ENCODE measurements at regions of chr15 and their contacts with region 1.

Region 1: DNA sequence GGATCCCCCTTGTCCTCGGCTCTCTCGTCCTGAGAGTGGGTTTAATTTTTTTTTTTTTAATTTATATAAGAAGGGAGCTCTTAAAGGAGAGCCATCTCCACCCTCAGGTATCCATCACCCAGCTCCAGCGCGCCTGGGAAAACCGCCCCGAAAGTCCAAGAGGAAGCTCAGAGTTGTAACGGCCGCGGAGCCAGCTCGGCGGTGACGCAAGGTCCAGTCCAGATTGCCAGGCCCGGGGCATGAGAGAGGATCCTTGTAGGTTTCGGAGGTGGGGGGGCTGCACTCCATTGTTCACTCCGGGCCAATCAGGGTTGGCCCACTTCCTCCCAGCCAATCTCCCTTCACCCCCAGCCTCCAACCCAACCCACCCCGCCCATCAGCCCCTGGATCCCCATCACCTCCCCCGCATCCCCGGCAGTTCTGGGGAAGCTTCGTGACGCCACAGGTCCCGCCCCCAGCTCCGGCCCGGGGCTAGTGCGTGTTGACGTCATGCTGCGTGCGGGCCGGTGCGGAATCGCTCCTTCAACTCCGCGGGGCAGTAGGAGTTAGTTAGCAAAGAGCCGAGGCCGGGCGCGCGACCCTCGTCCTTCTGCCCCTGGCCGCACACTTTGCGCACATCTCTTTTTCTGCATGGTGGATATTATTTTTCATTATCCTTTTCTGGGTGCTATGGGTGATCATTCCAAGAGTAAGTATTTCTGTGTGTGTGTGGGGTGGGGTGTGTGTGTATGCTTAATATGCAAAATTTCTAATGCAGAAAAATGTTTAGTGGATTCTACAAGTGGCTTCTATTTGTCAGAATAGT is at the start of gene ISL2:
- DNase-seq: peak; percentile 97
- H3K4me3 ChIP-seq: peak within 1 kb of the TSS; percentile 82
- H3K4me3 Mint-ChIP-seq: peak within 1 kb of the TSS; percentile 90
- H3K27ac Mint-ChIP-seq: peak within 1 kb of the TSS; percentile 89
- H3K4me1 ChIP-seq: peaks cover 27% of the 10 kb centered on the region
- H3K4me1 Mint-ChIP-seq: peaks cover 18% of the 10 kb centered on the region
- H3K27me3 ChIP-seq: no peaks in the 10 kb centered on the region
- H3K27me3 Mint-ChIP-seq: no peaks in the 10 kb centered on the region
- CTCF ChIP-seq: no peak
- total RNA-seq, gene ISL2: 11.0 TPM in 2 replicates

Region 2: GRCh38 chr15:76190834-76191538 is 145.5 kb before region 1 on chr15:
- CTCF ChIA-PET with region 1: interaction called, 5 read pairs
- POLR2A ChIA-PET with region 1: no interaction called
- intact Hi-C with region 1: loop called (anchors 2 kb)
- DNase-seq: peak; percentile 78 to 87
- H3K4me3 ChIP-seq: peak overlapping the region; percentile 19; the same call in 1 of the 2 replicates
- H3K4me3 Mint-ChIP-seq: peak overlapping the region; percentile 66
- H3K27ac Mint-ChIP-seq: peak overlapping the region; percentile 19
- H3K4me1 ChIP-seq: peaks cover 9% of the 10 kb centered on the region
- H3K4me1 Mint-ChIP-seq: peaks cover 16% of the 10 kb centered on the region
- H3K27me3 ChIP-seq: no peaks in the 10 kb centered on the region
- H3K27me3 Mint-ChIP-seq: peaks cover 3% of the 10 kb centered on the region
- CTCF ChIP-seq: peak; percentile 84 to 89

Region 3: DNA sequence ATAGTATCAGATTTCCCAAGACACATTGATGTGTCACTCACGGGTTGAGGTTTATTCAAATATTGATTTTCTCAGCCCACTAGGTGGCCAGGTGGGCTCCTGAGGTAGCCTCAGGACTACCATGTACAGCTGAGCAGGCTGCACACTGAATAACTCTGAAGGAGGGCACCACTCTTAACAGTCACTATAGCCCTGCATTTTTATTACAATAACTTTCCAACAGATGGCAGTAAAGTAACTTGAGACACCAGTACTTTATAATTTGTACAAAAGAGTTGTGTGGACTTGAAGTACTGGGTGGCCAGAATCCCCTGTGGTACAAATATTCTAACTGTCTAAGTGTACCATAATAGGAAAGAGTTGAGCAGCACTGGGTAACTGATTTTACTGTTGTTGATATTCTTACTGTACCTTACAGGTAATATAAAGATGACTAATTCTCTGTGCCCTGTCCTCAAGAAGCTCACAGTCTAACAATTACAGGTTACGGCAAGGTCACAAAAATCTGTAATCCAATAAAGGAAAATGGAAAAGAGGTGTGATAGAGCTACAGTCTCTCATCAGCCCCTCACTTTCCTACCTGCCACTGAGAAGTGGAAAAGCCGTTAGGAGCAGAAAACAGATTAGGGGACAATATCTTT is 101.2 kb before region 1 on chr15:
- CTCF ChIA-PET with region 1: interaction called, 4 read pairs
- POLR2A ChIA-PET with region 1: interaction called, 3 read pairs
- intact Hi-C with region 1: loop called (anchors 2 kb)
- DNase-seq: peak in 1 of 2 experiments; percentile 42
- H3K4me3 ChIP-seq: no peak overlapping the region
- H3K4me3 Mint-ChIP-seq: no peak overlapping the region
- H3K27ac Mint-ChIP-seq: no peak overlapping the region
- H3K4me1 ChIP-seq: no peaks in the 10 kb centered on the region
- H3K4me1 Mint-ChIP-seq: peaks cover 12% of the 10 kb centered on the region
- H3K27me3 ChIP-seq: no peaks in the 10 kb centered on the region
- H3K27me3 Mint-ChIP-seq: no peaks in the 10 kb centered on the region
- CTCF ChIP-seq: peak; percentile 32 to 61

Region 4: DNA sequence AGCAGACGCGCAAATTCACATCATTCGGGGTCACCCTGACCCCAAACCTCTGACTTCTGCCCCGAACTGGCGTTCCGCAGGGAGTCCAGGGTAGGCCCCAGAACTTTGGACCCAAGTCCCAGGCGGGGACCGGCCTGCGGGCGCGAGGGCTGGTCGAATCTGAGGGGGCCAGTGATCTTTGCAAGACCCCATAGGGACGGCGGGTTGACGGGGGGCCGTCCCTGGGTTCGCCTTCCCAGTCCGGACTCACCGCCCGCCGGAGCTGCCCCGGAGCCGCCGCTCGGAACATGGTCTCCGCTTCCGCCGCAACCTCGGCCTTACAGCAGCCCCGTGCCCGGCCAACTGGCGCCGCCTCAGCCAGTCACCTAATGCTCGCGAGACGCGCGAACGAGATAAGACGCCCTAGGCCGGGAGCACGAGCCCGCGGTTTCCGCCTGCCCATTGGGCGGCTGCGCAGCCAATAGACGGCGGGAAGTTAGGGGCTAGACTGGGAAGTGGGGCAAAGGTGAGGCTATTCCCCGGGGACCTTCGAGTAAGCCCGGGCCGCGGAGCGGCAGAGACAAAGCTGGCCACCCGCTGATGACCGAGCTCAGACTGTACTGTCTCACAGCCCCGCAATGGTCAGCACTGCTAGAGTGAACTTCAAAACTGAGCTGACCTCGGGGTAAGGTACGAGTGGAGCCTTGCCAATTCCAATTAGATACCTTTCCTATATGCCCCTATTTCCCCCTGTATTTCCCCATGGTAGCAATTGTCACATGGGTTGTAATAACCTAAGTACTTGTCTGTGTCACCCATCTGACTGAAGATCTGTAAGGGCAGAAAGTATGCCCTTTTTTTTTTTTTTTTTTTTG is 25.1 kb before region 1 on chr15 and contains the start of gene ETFA:
- CTCF ChIA-PET with region 1: interaction called, 5 read pairs
- POLR2A ChIA-PET with region 1: interaction called, 22 read pairs
- intact Hi-C with region 1: loop called (anchors 2 kb)
- DNase-seq: peak; percentile 98
- H3K4me3 ChIP-seq: peak within 1 kb of the TSS; percentile 75
- H3K4me3 Mint-ChIP-seq: peak within 1 kb of the TSS; percentile 63
- H3K27ac Mint-ChIP-seq: peak within 1 kb of the TSS; percentile 40
- H3K4me1 ChIP-seq: peaks cover 40% of the 10 kb centered on the region
- H3K4me1 Mint-ChIP-seq: peaks cover 25% of the 10 kb centered on the region
- H3K27me3 ChIP-seq: no peaks in the 10 kb centered on the region
- H3K27me3 Mint-ChIP-seq: no peaks in the 10 kb centered on the region
- CTCF ChIP-seq: no peak
- total RNA-seq, gene ETFA: 241 and 260 TPM in 2 replicates

Region 5: GRCh38 chr15:76353903-76354302 is 17.4 kb after region 1 on chr15:
- CTCF ChIA-PET with region 1: interaction called, 7 read pairs
- POLR2A ChIA-PET with region 1: interaction called, 13 read pairs
- intact Hi-C with region 1: no loop called
- DNase-seq: no peak
- H3K4me3 ChIP-seq: no peak overlapping the region
- H3K4me3 Mint-ChIP-seq: peak overlapping the region; percentile 34
- H3K27ac Mint-ChIP-seq: no peak overlapping the region
- H3K4me1 ChIP-seq: peaks cover 29% of the 10 kb centered on the region
- H3K4me1 Mint-ChIP-seq: peaks cover 20% of the 10 kb centered on the region
- H3K27me3 ChIP-seq: no peaks in the 10 kb centered on the region
- H3K27me3 Mint-ChIP-seq: no peaks in the 10 kb centered on the region
- CTCF ChIP-seq: no peak

Region 6: DNA sequence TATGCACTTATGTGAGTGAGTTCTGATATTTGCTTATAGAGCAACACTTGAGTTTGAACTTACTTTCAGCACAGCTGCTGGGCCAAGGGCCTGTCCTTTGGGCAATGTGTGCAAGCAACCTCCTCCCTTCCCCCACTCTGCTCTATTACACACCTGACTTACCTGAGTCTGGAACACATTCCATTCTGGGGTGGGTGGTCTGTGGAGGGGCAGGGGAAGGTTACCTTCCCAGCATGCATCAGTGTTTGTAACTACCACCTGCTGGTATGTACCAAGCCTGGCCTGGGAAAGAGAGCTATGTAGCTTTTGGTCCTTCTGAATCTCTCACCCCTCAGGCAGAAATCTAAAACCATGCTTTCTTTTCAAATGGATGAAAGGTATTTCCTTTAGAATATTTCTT is 103.1 kb after region 1 on chr15:
- CTCF ChIA-PET with region 1: no interaction called
- POLR2A ChIA-PET with region 1: interaction called, 10 read pairs
- intact Hi-C with region 1: no loop called
- DNase-seq: peak; percentile 27 to 55
- H3K4me3 ChIP-seq: no peak overlapping the region
- H3K4me3 Mint-ChIP-seq: no peak overlapping the region
- H3K27ac Mint-ChIP-seq: no peak overlapping the region
- H3K4me1 ChIP-seq: peaks cover 4% of the 10 kb centered on the region; the same call in 1 of the 2 replicates
- H3K4me1 Mint-ChIP-seq: no peaks in the 10 kb centered on the region
- H3K27me3 ChIP-seq: no peaks in the 10 kb centered on the region
- H3K27me3 Mint-ChIP-seq: no peaks in the 10 kb centered on the region
- CTCF ChIP-seq: no peak

Region 7: GRCh38 chr15:76866716-76867321 is 530.4 kb after region 1 on chr15:
- CTCF ChIA-PET with region 1: no interaction called
- POLR2A ChIA-PET with region 1: interaction called, 3 read pairs
- intact Hi-C with region 1: loop called (anchors 2 kb)
- DNase-seq: peak in 1 of 2 experiments; percentile 44
- H3K4me3 ChIP-seq: no peak overlapping the region
- H3K4me3 Mint-ChIP-seq: no peak overlapping the region
- H3K27ac Mint-ChIP-seq: no peak overlapping the region
- H3K4me1 ChIP-seq: no peaks in the 10 kb centered on the region
- H3K4me1 Mint-ChIP-seq: peaks cover 10% of the 10 kb centered on the region
- H3K27me3 ChIP-seq: no peaks in the 10 kb centered on the region
- H3K27me3 Mint-ChIP-seq: no peaks in the 10 kb centered on the region
- CTCF ChIP-seq: peak; percentile 38 to 44

Measured in Caco-2 (cell line).